HCT116 (cell line): ENCODE measurements at regions of chr1 and their contacts with region 1.

Region 1: DNA sequence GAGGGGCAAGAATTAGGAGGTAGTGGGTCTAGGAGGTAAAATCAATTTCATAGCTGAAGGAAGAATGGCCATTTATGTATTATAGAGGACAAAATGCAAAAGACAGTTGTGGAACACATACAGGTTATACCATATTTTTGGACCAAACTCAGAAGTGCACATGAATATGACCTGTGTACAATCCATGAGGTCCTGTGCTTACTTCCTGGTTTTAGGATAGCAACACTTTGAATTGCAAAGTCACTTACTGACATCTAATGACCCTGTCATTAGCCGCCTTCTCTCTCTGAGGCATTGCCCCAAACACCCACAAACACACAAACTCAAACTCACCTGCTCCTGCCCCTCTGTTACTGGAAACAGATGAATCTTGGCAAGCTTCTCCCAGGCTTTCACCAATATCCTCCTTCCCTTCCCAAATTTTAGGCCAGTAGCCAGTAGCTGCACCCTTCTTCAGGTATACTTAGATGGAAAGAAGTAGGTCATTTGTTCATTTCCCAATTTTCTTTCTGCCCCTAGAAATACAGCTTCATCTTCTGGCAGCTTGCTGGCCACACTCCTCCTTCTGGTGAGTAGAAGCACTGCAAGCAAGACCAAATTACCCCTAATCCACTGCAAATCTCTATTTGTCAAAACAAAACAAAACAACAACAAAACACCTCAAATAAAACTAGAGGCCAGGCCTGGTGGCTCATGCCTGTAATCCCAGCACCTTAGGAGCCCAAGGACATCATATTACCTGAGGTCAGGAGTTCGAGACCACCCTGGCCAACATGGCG is 13.7 kb upstream of the RPL5 start:
- DNase-seq: peak; percentile 36
- ATAC-seq: peak; percentile 79
- H3K4me3 ChIP-seq: no peak overlapping the region
- H3K27ac ChIP-seq: no peak overlapping the region
- H3K4me1 ChIP-seq: peaks cover 0 to 15% of the 10 kb centered on the region in 2 experiments; a peak in 1 of 4 replicates
- H3K27me3 ChIP-seq: no peaks in the 10 kb centered on the region
- CTCF ChIP-seq: peak; percentile 63 to 78 (median 73)
- POLR2A ChIP-seq: no peak
- RAD21 ChIP-seq: peak; percentile 61

Region 2: DNA sequence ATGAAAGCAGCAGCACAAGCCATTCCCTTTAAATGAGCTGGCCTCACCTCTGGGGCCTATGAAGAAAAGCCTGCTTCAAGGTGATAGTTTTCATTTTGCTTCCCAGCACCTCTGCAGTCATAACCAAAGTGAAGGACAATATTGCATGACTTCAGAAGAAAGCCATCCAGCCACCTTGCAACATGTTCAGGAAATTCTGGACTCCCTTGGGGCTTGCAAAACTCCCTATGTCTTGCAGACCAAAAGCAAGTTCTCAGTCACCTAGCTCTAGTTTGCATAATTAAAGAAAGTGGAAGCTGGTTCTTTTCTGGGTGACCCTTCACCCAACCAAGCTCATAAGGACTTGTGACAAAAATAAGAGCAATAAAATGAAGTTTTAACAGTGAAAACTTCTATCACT is 419.1 kb before region 1 on chr1:
- CTCF ChIA-PET with region 1: no interaction called
- POLR2A ChIA-PET with region 1: no interaction called
- RAD21 ChIA-PET with region 1: no interaction called
- intact Hi-C with region 1: no loop called
- DNase-seq: no peak
- ATAC-seq: no peak
- H3K4me3 ChIP-seq: no peak overlapping the region
- H3K27ac ChIP-seq: no peak overlapping the region
- H3K4me1 ChIP-seq: no peaks in the 10 kb centered on the region
- H3K27me3 ChIP-seq: no peaks in the 10 kb centered on the region
- CTCF ChIP-seq: no peak
- POLR2A ChIP-seq: no peak
- RAD21 ChIP-seq: no peak

Region 3: GRCh38 chr1:92831762-92832536 is 13.8 kb after region 1 on chr1 and contains the start of gene RPL5:
- CTCF ChIA-PET with region 1: interaction called, 18 read pairs
- POLR2A ChIA-PET with region 1: interaction called, 11 read pairs
- RAD21 ChIA-PET with region 1: no interaction called
- intact Hi-C with region 1: no loop called
- DNase-seq: peak; percentile 95
- ATAC-seq: peak; percentile 88
- H3K4me3 ChIP-seq: peak within 1 kb of the TSS; percentile 80 to 99
- H3K27ac ChIP-seq: peak within 1 kb of the TSS; percentile 87
- H3K4me1 ChIP-seq: peaks cover 2 to 16% of the 10 kb centered on the region in 2 experiments; a peak in 3 of 4 replicates
- H3K27me3 ChIP-seq: no peaks in the 10 kb centered on the region
- CTCF ChIP-seq: peak; percentile 69 to 97 (median 77)
- POLR2A ChIP-seq: peak; percentile 98
- RAD21 ChIP-seq: no peak
- total RNA-seq, gene RPL5: 1,480 TPM